ENCODE measurements at regions of chr6 and their contacts with region 1.

Region 1: DNA sequence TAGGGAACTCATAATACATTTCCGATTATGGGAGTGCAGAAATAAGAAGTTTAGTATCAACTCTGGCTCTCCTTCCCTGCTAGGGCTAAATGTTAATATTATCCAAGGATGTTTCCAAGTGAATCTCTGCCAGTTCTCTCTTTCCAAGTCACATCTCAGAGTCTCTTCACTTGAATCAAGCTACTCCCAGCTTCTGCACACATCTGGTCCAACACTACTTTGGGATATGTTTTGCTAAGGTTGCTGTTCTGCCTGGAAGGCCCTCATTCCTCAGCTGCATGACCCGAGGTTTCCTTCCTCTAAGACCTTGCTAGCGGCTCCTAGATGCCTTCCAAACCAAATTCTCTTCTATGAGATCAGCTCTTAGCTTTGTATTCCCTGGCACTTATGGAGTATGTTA is 331.8 kb downstream of the GJA1 start:
- H3K4me3 Mint-ChIP-seq: no peak overlapping the region
- H3K27ac Mint-ChIP-seq: no peak overlapping the region
- H3K4me1 Mint-ChIP-seq: no peaks in the 10 kb centered on the region
- H3K27me3 Mint-ChIP-seq: no peaks in the 10 kb centered on the region

Region 2: DNA sequence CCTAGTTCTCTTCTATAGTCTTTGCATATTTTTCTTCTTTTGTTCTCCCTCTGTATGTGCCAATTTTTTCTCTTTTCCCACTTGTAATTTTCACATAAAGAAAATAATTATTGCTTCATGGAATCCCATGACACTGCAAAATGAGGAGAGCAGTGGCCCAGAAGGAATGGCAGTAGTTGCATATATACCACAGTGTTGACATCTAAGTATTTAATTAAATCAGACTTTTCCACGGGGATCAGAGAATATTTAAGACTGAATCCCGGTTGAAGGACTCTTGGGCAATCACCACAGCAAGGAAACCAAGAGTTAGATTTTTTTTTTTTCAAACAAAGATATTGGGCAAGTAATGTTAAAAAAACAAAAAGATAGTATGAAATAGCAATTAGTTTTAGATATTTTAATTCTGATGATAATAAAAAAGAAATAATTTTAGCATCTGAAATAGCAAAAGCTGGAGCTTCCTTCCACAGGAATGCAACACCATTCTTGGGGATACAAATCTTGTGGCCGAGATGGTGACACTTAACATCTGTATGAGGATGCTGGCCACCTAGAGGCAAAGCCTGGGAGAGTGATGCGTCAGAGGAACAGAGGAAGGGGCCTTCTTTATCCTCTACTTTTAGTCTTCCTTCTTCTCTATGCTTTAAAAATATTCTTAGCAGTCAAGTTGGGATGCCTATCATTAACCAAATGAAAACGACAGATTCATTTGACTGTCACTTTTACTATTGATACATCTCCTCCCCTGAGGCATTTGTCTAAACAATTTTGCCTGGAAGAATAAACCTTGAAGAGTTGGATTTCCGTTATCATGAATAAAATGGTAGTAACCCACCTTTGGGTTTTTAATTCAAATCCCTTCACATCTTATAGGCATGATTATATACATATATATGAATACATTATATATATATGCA is 24.4 kb after region 1 on chr6:
- intact Hi-C with region 1: loop called (anchors 1 kb)
- H3K4me3 Mint-ChIP-seq: no peak overlapping the region
- H3K27ac Mint-ChIP-seq: no peak overlapping the region
- H3K4me1 Mint-ChIP-seq: no peaks in the 10 kb centered on the region
- H3K27me3 Mint-ChIP-seq: no peaks in the 10 kb centered on the region

Measured in dendritic cell treated with granulocyte-macrophage colony-stimulating factor and Interleukin-4, amounts not matched to agents 40 ng/mL and 50 ng/mL, for 4 days (primary cell).